CD8-positive, alpha-beta memory T cell (primary cell): ENCODE measurements at regions of chr22 and their contacts with region 1.

Region 1: GRCh38 chr22:43993027-43993760 is 30.9 kb upstream of the PARVB start:
- DNase-seq: peak; percentile 31 to 66 (median 36)
- H3K4me3 ChIP-seq: no peak overlapping the region
- H3K4me3 Mint-ChIP-seq: peak overlapping the region in 3 of 7 donors; percentile 31 to 63 (median 48)
- H3K27ac ChIP-seq: no peak overlapping the region
- H3K27ac Mint-ChIP-seq: peak overlapping the region; percentile 45 to 97 (median 78)
- H3K4me1 ChIP-seq: peaks cover 17% of the 10 kb centered on the region
- H3K4me1 Mint-ChIP-seq: peaks cover 23 to 39% (median 35%) of the 10 kb centered on the region in 3 donors
- H3K27me3 ChIP-seq: no peaks in the 10 kb centered on the region
- H3K27me3 Mint-ChIP-seq: no peaks in the 10 kb centered on the region

Region 2: DNA sequence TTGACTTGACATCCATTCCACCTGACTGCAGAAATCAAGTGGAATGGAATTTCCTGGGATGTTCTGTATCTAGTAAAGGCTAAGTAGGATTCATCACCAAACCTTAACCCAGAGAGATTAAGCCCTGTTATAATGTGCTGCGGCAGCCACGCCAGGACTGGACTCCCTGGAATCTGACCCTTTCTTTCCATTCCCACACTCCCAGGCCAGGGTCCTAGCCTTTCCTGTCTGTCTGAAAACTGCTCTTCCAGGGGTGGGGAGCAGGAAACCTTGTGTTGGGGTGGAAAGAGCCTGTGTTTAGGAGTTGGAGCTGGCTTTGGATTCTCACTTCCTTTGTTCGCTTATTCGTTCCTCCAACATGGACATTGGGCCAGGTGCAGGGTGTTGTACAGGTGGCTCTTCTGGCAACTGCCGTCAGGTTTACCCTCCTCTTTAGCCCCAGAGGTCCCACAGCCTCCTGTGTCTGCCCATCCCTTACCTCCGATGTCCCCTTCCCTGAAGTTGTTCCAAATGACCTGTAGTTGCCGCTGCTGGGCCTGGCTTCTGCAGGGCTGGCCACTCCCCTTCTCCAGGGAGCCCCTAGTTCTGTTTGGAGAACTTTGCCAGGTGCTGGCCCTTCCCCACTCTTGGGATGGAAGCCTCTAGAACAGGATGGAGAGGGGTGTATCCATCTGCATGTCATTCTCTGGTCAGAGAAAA is 10.4 kb after region 1 on chr22:
- CTCF ChIA-PET with region 1: interaction called, 16 read pairs
- POLR2A ChIA-PET with region 1: no interaction called
- DNase-seq: no peak
- H3K4me3 ChIP-seq: no peak overlapping the region
- H3K4me3 Mint-ChIP-seq: no peak overlapping the region
- H3K27ac ChIP-seq: peak overlapping the region; percentile 6
- H3K27ac Mint-ChIP-seq: peak overlapping the region in 2 of 8 donors; percentile 9 to 33
- H3K4me1 ChIP-seq: no peaks in the 10 kb centered on the region
- H3K4me1 Mint-ChIP-seq: no peaks in the 10 kb centered on the region
- H3K27me3 ChIP-seq: no peaks in the 10 kb centered on the region
- H3K27me3 Mint-ChIP-seq: no peaks in the 10 kb centered on the region

Region 3: DNA sequence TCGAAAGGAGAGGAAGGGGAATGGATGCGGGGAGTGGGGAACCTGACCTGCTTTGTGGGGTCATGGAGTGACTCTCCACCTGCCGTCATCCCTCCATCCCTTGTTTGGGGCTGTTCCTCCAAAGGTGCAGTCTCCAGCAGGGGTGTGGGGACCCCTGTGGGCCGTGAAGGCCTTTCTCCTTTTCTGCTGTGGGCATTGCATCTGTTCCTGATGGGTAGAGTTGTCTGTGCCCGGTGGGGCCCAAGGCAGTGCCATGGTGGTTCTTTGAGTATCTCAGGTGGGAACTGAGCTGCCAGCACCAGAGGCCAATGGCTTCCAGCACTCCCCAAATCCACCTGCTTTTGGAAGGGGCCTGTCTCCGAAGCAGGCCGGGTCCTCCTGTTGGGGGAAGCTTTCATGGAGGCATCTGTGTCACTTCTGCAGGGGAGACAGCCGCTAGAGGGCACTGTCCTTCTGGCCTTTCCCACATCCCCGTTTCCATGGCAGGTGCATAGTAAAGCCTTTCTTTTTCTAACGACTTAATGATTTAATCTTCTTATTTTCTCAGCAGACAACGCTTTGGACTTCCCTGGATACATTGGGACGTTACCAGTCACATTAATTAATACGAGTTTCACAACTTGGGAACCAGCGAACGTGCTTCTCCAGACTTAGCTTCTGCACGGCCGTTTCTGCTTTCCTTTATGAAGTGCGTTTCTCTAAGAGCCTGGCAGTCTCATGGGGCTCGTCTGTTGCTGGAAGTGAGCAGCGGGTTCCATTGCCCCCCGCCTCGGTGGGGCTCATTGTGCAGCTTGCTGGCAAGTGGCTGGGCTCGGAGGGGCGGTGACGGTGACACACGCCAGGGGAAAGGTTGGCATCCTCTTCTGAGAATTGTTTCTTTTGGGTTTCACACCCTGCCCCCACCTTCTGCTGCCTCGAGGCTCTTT is 88.0 kb after region 1 on chr22:
- CTCF ChIA-PET with region 1: interaction called, 30 read pairs
- POLR2A ChIA-PET with region 1: no interaction called
- DNase-seq: peak; percentile 48 to 80 (median 53)
- H3K4me3 ChIP-seq: no peak overlapping the region
- H3K4me3 Mint-ChIP-seq: no peak overlapping the region
- H3K27ac ChIP-seq: no peak overlapping the region
- H3K27ac Mint-ChIP-seq: no peak overlapping the region
- H3K4me1 ChIP-seq: no peaks in the 10 kb centered on the region
- H3K4me1 Mint-ChIP-seq: no peaks in the 10 kb centered on the region
- H3K27me3 ChIP-seq: no peaks in the 10 kb centered on the region
- H3K27me3 Mint-ChIP-seq: peaks cover 0 to 5% of the 10 kb centered on the region in 2 donors

Region 4: GRCh38 chr22:44567846-44568493 is 574.8 kb after region 1 on chr22:
- CTCF ChIA-PET with region 1: interaction called, 16 read pairs
- POLR2A ChIA-PET with region 1: interaction called, 3 read pairs
- DNase-seq: peak; percentile 30 to 68 (median 35)
- H3K4me3 ChIP-seq: no peak overlapping the region
- H3K4me3 Mint-ChIP-seq: no peak overlapping the region
- H3K27ac ChIP-seq: no peak overlapping the region
- H3K27ac Mint-ChIP-seq: peak overlapping the region in 2 of 8 donors; percentile 76 to 82
- H3K4me1 ChIP-seq: no peaks in the 10 kb centered on the region
- H3K4me1 Mint-ChIP-seq: peaks cover 0 to 9% (median 2%) of the 10 kb centered on the region in 3 donors
- H3K27me3 ChIP-seq: no peaks in the 10 kb centered on the region
- H3K27me3 Mint-ChIP-seq: peaks cover 1 to 15% of the 10 kb centered on the region in 2 donors

Region 5: DNA sequence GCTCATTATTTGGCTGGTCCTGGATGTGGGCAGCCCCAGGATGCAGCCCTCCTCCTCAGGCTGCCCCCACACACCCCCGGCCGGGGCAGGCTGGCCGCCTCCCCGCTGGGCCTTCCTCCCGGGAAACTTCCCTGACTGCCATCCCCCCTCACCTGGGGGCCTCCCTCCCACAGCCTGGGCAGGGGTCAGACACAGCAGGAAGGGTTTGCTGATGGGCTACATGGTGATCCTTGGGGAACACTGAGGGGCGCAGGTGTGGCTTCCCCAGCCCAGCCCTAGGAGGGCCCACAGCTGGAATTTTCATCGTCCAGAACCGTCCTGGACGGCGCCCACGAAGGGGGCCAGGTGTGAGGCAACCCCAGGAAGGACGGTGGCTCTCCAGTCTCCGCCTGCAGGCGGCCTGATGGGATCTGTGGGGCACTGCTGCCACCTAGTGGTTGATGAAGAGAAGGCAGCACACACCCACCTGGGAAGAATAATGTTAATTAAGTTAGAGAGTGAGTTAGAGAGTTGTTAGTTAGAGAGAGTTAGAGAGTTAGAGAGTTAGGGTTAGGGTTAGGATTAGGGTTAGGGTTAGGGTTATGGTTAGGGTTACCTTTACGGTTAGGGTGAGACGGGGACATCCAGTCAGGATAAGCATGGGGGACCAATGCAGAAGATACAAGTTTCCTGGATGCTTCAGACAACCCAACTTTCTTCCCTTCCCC is 632.9 kb after region 1 on chr22:
- CTCF ChIA-PET with region 1: interaction called, 105 read pairs
- POLR2A ChIA-PET with region 1: no interaction called
- DNase-seq: peak; percentile 68 to 86 (median 72)
- H3K4me3 ChIP-seq: no peak overlapping the region
- H3K4me3 Mint-ChIP-seq: peak overlapping the region in 1 of 7 donors; percentile 38
- H3K27ac ChIP-seq: no peak overlapping the region
- H3K27ac Mint-ChIP-seq: peak overlapping the region in 6 of 8 donors; percentile 3 to 48 (median 16)
- H3K4me1 ChIP-seq: peaks cover 3% of the 10 kb centered on the region
- H3K4me1 Mint-ChIP-seq: peaks cover 4 to 19% (median 6%) of the 10 kb centered on the region in 3 donors
- H3K27me3 ChIP-seq: no peaks in the 10 kb centered on the region
- H3K27me3 Mint-ChIP-seq: peaks cover 0 to 5% of the 10 kb centered on the region in 2 donors